ENCODE measurements at regions of chr15 and their contacts with region 1.

Region 1: GRCh38 chr15:44971036-44971435 is 14.5 kb downstream of the TERB2 start:
- DNase-seq: no peak

Region 2: GRCh38 chr15:44879086-44879485 is 92.0 kb before region 1 on chr15:
- intact Hi-C with region 1: no loop called
- DNase-seq: no peak

Region 3: DNA sequence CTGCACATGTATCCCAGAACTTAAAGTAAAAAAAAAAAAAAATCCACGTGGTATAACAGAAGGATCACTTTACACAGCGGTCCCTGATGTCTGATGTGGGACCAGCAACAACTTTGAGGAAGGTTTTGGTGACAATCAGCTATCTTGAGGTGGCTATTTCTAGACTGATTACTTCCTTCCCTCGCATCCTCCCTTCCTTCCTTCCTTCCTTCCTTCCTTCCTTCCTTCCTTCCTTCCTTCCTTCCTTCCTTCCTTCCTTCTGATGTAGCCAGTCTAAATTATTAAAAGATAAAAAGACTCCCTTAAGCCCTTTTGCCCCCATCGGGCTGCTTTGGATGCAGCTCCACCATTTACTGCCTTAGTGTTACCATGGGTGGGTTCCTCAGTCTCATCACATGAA is 66.9 kb after region 1 on chr15:
- intact Hi-C with region 1: loop called (anchors 5 kb)
- DNase-seq: no peak

Measured in head of caudate nucleus (tissue), 42 donors.